ENCODE measurements at regions of chr1 and their contacts with region 1.

Region 1: GRCh38 chr1:150473659-150474058 is 13.6 kb upstream of the TARS2 start:
- DNase-seq: peak; percentile 90
- ATAC-seq: peak; percentile 91
- H3K4me3 ChIP-seq: no peak overlapping the region; a peak in 1 of 6 replicates
- H3K27ac ChIP-seq: peak overlapping the region; percentile 67
- H3K4me1 ChIP-seq: peaks cover 98% of the 10 kb centered on the region
- H3K27me3 ChIP-seq: no peaks in the 10 kb centered on the region
- CTCF ChIP-seq: no peak
- EP300 ChIP-seq: peak; percentile 58 to 92; a peak in 3 of 4 replicates
- POLR2A ChIP-seq: no peak
- RAD21 ChIP-seq: no peak; the same call in 1 of the 2 replicates

Region 2: GRCh38 chr1:150387200-150387599 is 86.5 kb before region 1 on chr1:
- CTCF ChIA-PET with region 1: no interaction called
- POLR2A ChIA-PET with region 1: no interaction called
- in situ Hi-C with region 1: no loop called
- intact Hi-C with region 1: no loop called
- DNase-seq: peak; percentile 81
- ATAC-seq: peak; percentile 96
- H3K4me3 ChIP-seq: peak overlapping the region; percentile 33 to 43 (median 39)
- H3K27ac ChIP-seq: peak overlapping the region; percentile 71
- H3K4me1 ChIP-seq: peaks cover 70% of the 10 kb centered on the region
- H3K27me3 ChIP-seq: no peaks in the 10 kb centered on the region
- CTCF ChIP-seq: no peak
- EP300 ChIP-seq: peak in 1 of 2 experiments; percentile 39; a peak in 1 of 4 replicates
- POLR2A ChIP-seq: no peak
- RAD21 ChIP-seq: no peak

Region 3: GRCh38 chr1:150515328-150516048 is 41.8 kb after region 1 on chr1 and contains the start of gene FALEC:
- CTCF ChIA-PET with region 1: no interaction called
- POLR2A ChIA-PET with region 1: interaction called, 10 read pairs
- in situ Hi-C with region 1: no loop called
- intact Hi-C with region 1: no loop called
- DNase-seq: peak; percentile 93
- ATAC-seq: peak; percentile 95
- H3K4me3 ChIP-seq: peak within 1 kb of the TSS; percentile 73 to 84 (median 80)
- H3K27ac ChIP-seq: peak within 1 kb of the TSS; percentile 82
- H3K4me1 ChIP-seq: peaks cover 32% of the 10 kb centered on the region
- H3K27me3 ChIP-seq: no peaks in the 10 kb centered on the region; a peak in 1 of 5 replicates
- CTCF ChIP-seq: no peak; the same call in 1 of the 2 replicates
- EP300 ChIP-seq: peak in 1 of 2 experiments; percentile 14; a peak in 1 of 4 replicates
- POLR2A ChIP-seq: peak; percentile 60 to 82
- RAD21 ChIP-seq: peak; percentile 13; the same call in 1 of the 2 replicates
- total RNA-seq, gene FALEC: 0.71 TPM in 1 of 2 replicates, not detected in the other

Region 4: DNA sequence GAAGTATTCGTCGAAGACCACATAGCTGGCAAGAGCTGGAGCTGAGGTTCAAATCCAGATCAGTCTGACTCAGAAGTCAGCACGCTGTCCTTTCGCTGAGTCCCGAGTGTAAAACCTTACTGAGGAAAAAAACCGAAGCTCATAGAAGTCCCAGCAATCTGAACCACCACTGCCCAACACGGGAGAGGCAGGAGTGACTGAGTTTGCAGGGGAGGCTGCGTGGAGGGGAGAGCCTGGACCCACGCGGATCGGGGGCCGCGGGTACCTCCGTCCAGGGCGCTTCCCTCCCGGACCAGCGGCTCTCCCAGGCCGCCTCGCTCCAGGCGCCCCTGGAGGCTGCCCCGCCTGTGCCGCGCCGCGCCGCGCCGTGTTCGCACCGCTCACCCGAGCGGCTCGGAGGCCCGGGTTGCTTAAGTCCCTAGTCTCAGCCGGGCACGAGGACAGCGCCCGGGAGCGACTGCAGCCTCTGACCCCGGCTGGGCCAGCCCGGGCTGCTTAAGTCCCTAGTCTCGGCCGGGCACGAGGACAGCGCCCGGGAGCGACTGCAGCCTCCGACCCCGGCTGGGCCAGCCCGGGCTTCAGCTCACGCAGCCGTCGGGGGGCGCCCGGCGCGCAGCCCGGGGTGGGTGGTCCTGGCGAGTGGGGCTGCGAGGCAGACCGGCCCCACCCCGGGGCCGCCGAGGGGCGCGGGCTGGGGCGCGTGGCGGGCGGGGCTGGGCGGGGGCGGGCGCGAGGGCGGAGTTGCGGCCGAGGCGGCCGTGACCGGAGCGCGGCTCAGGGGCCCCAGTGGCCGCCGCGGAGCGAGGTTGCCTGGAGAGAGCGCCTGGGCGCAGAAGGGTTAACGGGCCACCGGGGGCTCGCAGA is 75.2 kb after region 1 on chr1 and contains the start of gene ADAMTSL4:
- CTCF ChIA-PET with region 1: no interaction called
- POLR2A ChIA-PET with region 1: no interaction called
- in situ Hi-C with region 1: loop called (anchors 5 kb)
- intact Hi-C with region 1: no loop called
- DNase-seq: no peak
- ATAC-seq: peak; percentile 67
- H3K4me3 ChIP-seq: peak within 1 kb of the TSS; percentile 62 to 83 (median 63)
- H3K27ac ChIP-seq: peak within 1 kb of the TSS; percentile 57
- H3K4me1 ChIP-seq: peaks cover 61% of the 10 kb centered on the region
- H3K27me3 ChIP-seq: no peaks in the 10 kb centered on the region; a peak in 1 of 5 replicates
- CTCF ChIP-seq: peak; percentile 30; the same call in 1 of the 2 replicates
- EP300 ChIP-seq: no peak
- POLR2A ChIP-seq: peak in 1 of 2 experiments; percentile 45; a peak in 1 of 4 replicates
- RAD21 ChIP-seq: 0 out of 2 replicates have a peak, but pooled peaks have one; percentile 37
- total RNA-seq, gene ADAMTSL4: 1.9 and 3.9 TPM in 2 replicates